Heart right ventricle (tissue), 16 donors: ENCODE measurements at regions of chr14 and their contacts with region 1.

Region 1: GRCh38 chr14:90319173-90319572 is 12.6 kb downstream of the NRDE2 start:
- DNase-seq: no peak
- ATAC-seq: no peak
- H3K4me3 ChIP-seq: no peak overlapping the region
- H3K27ac ChIP-seq: no peak overlapping the region
- H3K4me1 ChIP-seq: peaks cover 0 to 4% (median 0%) of the 10 kb centered on the region in 9 donors
- H3K27me3 ChIP-seq: no peaks in the 10 kb centered on the region
- CTCF ChIP-seq: no peak

Region 2: DNA sequence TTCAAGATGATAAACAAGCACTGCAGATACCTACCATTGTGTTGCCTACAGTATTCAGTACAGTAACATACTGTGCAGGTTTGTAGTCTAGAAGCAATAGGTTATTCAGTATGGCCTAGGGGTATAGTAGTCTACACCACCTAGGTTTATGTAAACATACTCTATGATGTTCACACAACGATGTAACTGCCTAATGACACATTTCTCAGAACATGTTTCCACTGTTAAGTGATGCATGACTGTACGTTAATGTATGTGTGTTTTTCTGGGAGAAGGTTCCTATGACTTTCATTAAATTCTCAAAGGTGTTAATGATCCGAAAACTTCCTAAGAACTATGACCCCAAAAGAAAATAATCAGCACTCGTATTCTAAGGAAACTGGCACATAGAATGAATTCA is 56.8 kb after region 1 on chr14:
- intact Hi-C with region 1: loop called in 1 of 10 experiments (anchors 10 kb)
- DNase-seq: no peak
- ATAC-seq: no peak
- H3K4me3 ChIP-seq: no peak overlapping the region
- H3K27ac ChIP-seq: no peak overlapping the region
- H3K4me1 ChIP-seq: peaks cover 0 to 4% (median under 1%) of the 10 kb centered on the region in 9 donors
- H3K27me3 ChIP-seq: no peaks in the 10 kb centered on the region
- CTCF ChIP-seq: no peak